GM13977 (cell line): ENCODE measurements at regions of chr5 and their contacts with region 1.

Region 1: GRCh38 chr5:43320846-43321245 is 7.6 kb upstream of the HMGCS1 start:
- DNase-seq: no peak
- CTCF ChIP-seq: no peak

Region 2: GRCh38 chr5:42950440-42951292 is 370.2 kb before region 1 on chr5:
- in situ Hi-C with region 1: no loop called
- DNase-seq: peak; percentile 71
- CTCF ChIP-seq: no peak

Region 3: DNA sequence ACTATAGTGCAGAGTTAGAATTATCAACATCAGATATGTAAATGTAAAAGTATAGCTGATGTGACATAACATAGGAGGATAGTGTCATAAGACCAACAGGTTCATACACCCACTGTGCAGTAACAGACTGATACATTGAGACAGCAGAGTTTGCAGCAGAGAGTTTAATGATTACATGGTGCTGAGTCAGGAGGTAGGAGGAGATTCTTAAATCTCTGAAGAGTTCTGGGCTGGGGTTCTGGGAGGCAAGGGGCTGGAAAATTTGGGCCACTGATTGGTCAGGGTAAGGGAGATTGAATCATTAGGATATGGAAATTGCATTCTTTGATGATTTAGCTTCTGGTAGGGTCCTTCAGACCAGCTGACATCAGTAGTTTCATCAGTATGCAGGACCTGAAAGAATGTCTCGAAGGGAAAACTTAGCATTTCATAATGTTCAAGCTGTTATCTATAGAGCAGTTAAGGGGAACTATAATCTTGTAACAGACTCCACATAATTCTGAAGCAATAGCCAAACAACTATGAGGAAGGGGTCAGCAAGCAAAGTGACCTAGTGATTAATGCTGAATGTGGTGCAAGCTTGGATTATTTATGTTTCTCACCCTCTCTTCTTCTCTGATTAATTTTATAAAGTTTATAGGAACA is 55.8 kb after region 1 on chr5:
- in situ Hi-C with region 1: loop called (anchors 10 kb)
- DNase-seq: no peak
- CTCF ChIP-seq: no peak